ENCODE measurements at regions of chr2 and their contacts with region 1.

Region 1: GRCh38 chr2:68751397-68752339 is 17.1 kb downstream of the ARHGAP25 start:
- DNase-seq: peak; percentile 91 to 96 (median 94)
- H3K4me3 ChIP-seq: peak overlapping the region in 2 of 7 experiments; percentile 19 to 27
- H3K27ac ChIP-seq: peak overlapping the region in 1 of 2 experiments; percentile 62
- H3K4me1 ChIP-seq: peaks cover 16 to 62% (median 39%) of the 10 kb centered on the region in 4 experiments
- H3K27me3 ChIP-seq: no peaks in the 10 kb centered on the region

Region 2: DNA sequence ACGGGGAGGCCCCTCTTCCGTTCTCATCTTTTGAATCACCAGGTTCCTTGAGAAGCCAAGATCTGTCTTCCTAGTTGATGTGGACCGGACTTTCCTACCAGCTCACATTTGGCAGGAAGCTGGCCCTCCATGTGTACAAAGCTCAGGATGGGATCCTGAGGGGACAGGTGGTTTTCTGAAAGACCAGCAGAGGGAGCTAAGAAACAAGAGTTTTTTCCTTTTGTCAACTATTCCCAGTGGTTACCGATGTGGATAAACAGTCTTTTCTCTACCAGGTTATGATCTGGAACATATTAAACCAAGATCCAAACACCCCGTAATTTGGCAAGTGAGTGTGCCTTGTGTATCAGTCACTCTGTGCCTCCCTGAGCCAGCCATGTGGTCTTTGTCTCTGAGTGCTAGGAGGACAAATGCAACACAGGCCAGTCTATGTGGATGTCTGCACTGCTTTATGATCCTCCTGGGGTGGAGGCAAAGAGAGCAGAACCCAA is 42.2 kb before region 1 on chr2:
- CTCF ChIA-PET with region 1: interaction called, 48 read pairs
- POLR2A ChIA-PET with region 1: interaction called, 3 read pairs
- DNase-seq: peak; percentile 53 to 57 (median 57)
- H3K4me3 ChIP-seq: no peak overlapping the region
- H3K27ac ChIP-seq: no peak overlapping the region
- H3K4me1 ChIP-seq: peaks cover 2 to 22% (median 16%) of the 10 kb centered on the region in 4 experiments
- H3K27me3 ChIP-seq: no peaks in the 10 kb centered on the region

Region 3: GRCh38 chr2:68734688-68735525 is 16.8 kb before region 1 on chr2 and contains the start of gene ARHGAP25:
- CTCF ChIA-PET with region 1: interaction called, 106 read pairs
- POLR2A ChIA-PET with region 1: interaction called, 3 read pairs
- DNase-seq: peak; percentile 59 to 95 (median 89)
- H3K4me3 ChIP-seq: peak within 1 kb of the TSS in 6 of 7 experiments; percentile 71 to 90 (median 86)
- H3K27ac ChIP-seq: peak within 1 kb of the TSS; percentile 71 to 85
- H3K4me1 ChIP-seq: peaks cover 59 to 93% (median 77%) of the 10 kb centered on the region in 4 experiments
- H3K27me3 ChIP-seq: no peaks in the 10 kb centered on the region

Region 4: GRCh38 chr2:68774569-68775271 is 23.1 kb after region 1 on chr2:
- CTCF ChIA-PET with region 1: interaction called, 56 read pairs
- POLR2A ChIA-PET with region 1: interaction called, 3 read pairs
- DNase-seq: peak; percentile 87 to 97 (median 95)
- H3K4me3 ChIP-seq: peak overlapping the region in 6 of 7 experiments; percentile 36 to 70 (median 58)
- H3K27ac ChIP-seq: peak overlapping the region; percentile 58 to 82
- H3K4me1 ChIP-seq: peaks cover 38 to 87% (median 78%) of the 10 kb centered on the region in 4 experiments
- H3K27me3 ChIP-seq: no peaks in the 10 kb centered on the region

Region 5: GRCh38 chr2:68817306-68817705 is 65.6 kb after region 1 on chr2:
- CTCF ChIA-PET with region 1: interaction called, 19 read pairs
- POLR2A ChIA-PET with region 1: no interaction called
- DNase-seq: no peak
- H3K4me3 ChIP-seq: no peak overlapping the region
- H3K27ac ChIP-seq: no peak overlapping the region
- H3K4me1 ChIP-seq: peaks cover 0 to 11% (median under 1%) of the 10 kb centered on the region in 4 experiments
- H3K27me3 ChIP-seq: no peaks in the 10 kb centered on the region

Region 6: DNA sequence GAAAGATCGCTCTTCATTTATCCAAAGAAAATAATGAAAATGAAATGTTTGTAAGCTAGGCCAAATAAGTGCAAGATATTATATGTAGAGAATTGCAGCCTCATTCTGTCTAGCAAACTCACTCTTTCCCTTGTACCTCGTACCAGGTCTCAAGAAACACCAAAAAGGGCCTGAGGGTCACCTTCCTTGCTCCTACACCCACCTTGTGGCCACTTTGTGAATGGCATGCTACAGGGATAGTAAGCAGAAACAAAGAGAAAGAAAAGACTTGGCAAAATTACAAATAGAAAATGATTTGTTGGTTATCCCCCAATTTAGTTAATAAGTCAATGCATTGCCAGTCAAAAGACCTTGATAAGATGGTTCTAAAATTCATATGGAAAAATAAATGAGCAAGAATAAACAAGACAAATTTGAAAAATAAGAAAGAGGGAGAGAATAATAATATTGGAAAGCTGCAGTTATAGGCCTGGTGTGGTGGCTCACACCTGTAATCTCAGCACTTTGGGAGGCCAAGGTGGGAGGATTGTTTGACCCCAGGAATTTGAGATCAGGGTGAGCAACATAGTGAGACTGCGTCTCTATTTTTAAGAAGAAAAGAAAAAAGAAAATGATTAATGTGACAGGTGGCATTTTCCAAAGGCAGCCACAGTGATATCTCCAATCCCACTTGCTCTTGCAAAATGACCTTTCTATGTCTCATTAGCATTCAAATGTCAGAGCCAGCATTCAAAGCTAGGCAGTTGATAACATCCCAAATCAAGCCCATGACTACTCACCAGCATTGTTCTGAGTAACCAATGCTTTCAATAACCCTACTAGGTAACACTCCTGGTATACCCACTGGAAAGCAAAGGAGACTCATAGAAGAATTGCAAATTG is 158.4 kb after region 1 on chr2:
- CTCF ChIA-PET with region 1: interaction called, 32 read pairs
- POLR2A ChIA-PET with region 1: interaction called, 4 read pairs
- DNase-seq: peak; percentile 85 to 91 (median 88)
- H3K4me3 ChIP-seq: no peak overlapping the region
- H3K27ac ChIP-seq: no peak overlapping the region
- H3K4me1 ChIP-seq: peaks cover 11 to 74% (median 65%) of the 10 kb centered on the region in 4 experiments
- H3K27me3 ChIP-seq: no peaks in the 10 kb centered on the region

Measured in common myeloid progenitor, CD34-positive (primary cell).